CD8-positive, alpha-beta T cell (primary cell): ENCODE measurements at regions of chr19 and their contacts with region 1.

Region 1: GRCh38 chr19:43555185-43555770 is 20.0 kb downstream of the XRCC1 start:
- DNase-seq: peak; percentile 71 to 90 (median 86)
- ATAC-seq: peak; percentile 100
- H3K4me3 ChIP-seq: no peak overlapping the region
- H3K4me3 Mint-ChIP-seq: no peak overlapping the region
- H3K27ac ChIP-seq: no peak overlapping the region
- H3K27ac Mint-ChIP-seq: no peak overlapping the region
- H3K4me1 ChIP-seq: peaks cover 7% of the 10 kb centered on the region
- H3K4me1 Mint-ChIP-seq: peaks cover 17% of the 10 kb centered on the region
- H3K27me3 ChIP-seq: no peaks in the 10 kb centered on the region
- H3K27me3 Mint-ChIP-seq: no peaks in the 10 kb centered on the region
- CTCF ChIP-seq: peak; percentile 79

Region 2: GRCh38 chr19:43540381-43540780 is 14.9 kb before region 1 on chr19:
- CTCF ChIA-PET with region 1: interaction called, 41 read pairs
- POLR2A ChIA-PET with region 1: interaction called, 5 read pairs
- intact Hi-C with region 1: no loop called
- DNase-seq: no peak
- ATAC-seq: no peak
- H3K4me3 ChIP-seq: no peak overlapping the region
- H3K4me3 Mint-ChIP-seq: no peak overlapping the region
- H3K27ac ChIP-seq: no peak overlapping the region
- H3K27ac Mint-ChIP-seq: no peak overlapping the region
- H3K4me1 ChIP-seq: no peaks in the 10 kb centered on the region
- H3K4me1 Mint-ChIP-seq: peaks cover 2% of the 10 kb centered on the region
- H3K27me3 ChIP-seq: no peaks in the 10 kb centered on the region
- H3K27me3 Mint-ChIP-seq: no peaks in the 10 kb centered on the region
- CTCF ChIP-seq: no peak

Region 3: GRCh38 chr19:43584484-43584883 is 29.2 kb after region 1 on chr19:
- CTCF ChIA-PET with region 1: interaction called, 15 read pairs
- POLR2A ChIA-PET with region 1: interaction called, 3 read pairs
- intact Hi-C with region 1: no loop called
- DNase-seq: no peak
- ATAC-seq: no peak
- H3K4me3 ChIP-seq: no peak overlapping the region
- H3K4me3 Mint-ChIP-seq: no peak overlapping the region
- H3K27ac ChIP-seq: peak overlapping the region in 1 of 2 experiments; percentile 65
- H3K27ac Mint-ChIP-seq: peak overlapping the region; percentile 69
- H3K4me1 ChIP-seq: peaks cover 17% of the 10 kb centered on the region
- H3K4me1 Mint-ChIP-seq: peaks cover 14% of the 10 kb centered on the region
- H3K27me3 ChIP-seq: no peaks in the 10 kb centered on the region
- H3K27me3 Mint-ChIP-seq: no peaks in the 10 kb centered on the region
- CTCF ChIP-seq: no peak

Region 4: DNA sequence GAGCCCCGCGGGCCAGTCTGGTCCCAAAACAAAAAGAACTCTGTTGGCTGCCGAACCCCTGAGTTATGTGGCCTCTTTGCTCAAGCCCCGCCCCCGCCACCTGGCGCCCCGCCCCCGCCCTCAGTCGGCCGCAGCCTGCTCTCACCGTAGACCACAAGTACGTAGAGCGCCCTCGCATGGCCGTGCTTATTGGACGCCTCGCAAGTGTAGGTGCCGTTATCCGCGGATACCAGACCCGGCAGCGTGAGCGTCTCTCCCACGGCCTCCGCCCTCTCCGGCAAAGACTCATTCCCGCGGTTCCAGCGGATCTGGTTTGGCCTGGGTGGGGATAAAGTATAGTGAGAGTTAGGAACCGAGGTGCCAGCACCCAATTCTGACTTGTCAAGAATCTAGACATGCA is 69.7 kb after region 1 on chr19:
- CTCF ChIA-PET with region 1: interaction called, 4 read pairs
- POLR2A ChIA-PET with region 1: interaction called, 4 read pairs
- intact Hi-C with region 1: loop called in 1 of 2 experiments (anchors 2 kb)
- DNase-seq: peak; percentile 68 to 93 (median 84)
- ATAC-seq: peak; percentile 89
- H3K4me3 ChIP-seq: no peak overlapping the region
- H3K4me3 Mint-ChIP-seq: no peak overlapping the region
- H3K27ac ChIP-seq: no peak overlapping the region
- H3K27ac Mint-ChIP-seq: no peak overlapping the region
- H3K4me1 ChIP-seq: peaks cover 21% of the 10 kb centered on the region
- H3K4me1 Mint-ChIP-seq: peaks cover 20% of the 10 kb centered on the region
- H3K27me3 ChIP-seq: peaks cover 3 to 4% of the 10 kb centered on the region in 2 experiments
- H3K27me3 Mint-ChIP-seq: peaks cover 9% of the 10 kb centered on the region
- CTCF ChIP-seq: peak; percentile 51